Calu3 (cell line): ENCODE measurements at regions of chr2 and their contacts with region 1.

Region 1: DNA sequence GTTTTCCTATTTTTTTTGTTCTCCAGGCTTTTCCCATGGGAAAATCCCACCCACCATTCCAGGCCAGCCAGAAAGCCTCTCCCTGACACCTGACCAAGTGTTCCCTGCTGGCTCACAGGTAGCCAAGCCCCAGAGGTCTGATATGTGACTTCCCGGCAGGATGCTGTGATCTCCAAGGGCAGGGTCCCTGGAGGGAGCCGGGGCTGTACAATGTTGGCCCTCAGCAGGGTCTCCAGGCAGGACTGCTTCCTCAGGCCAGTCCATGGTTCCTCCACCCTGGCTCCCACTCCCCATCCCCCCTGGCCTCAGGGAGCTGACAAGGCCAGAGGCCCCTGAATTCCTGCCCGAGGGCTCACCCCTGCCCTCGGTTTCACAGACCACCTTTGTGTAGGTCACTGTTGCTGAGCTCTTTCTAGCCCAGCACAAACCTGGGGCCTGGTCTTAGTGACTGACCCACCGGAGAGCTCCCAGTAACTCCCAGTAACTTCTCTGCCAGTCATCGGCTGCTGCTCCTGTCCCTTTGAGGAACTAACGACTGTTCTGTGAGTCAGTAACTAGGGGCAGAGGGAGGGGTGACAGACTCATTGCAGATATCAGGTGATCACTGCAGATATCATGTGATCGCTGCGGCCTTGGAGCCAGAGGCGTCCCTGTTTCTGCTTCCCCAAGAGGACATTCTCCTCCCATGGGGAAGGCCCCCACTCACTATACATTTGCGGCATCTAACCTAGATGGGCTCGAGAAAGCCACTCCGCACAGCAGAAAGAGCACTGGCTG is 38.7 kb downstream of the SDC1 start:
- DNase-seq: peak; percentile 75
- H3K4me3 Mint-ChIP-seq: peak overlapping the region; percentile 50
- H3K27ac Mint-ChIP-seq: peak overlapping the region; percentile 68
- H3K4me1 Mint-ChIP-seq: peaks cover 54% of the 10 kb centered on the region
- H3K27me3 Mint-ChIP-seq: no peaks in the 10 kb centered on the region
- CTCF ChIP-seq: no peak

Region 2: GRCh38 chr2:20012299-20013125 is 173.8 kb before region 1 on chr2 and contains the start of gene MATN3:
- CTCF ChIA-PET with region 1: no interaction called
- intact Hi-C with region 1: no loop called
- DNase-seq: peak; percentile 55
- H3K4me3 Mint-ChIP-seq: peak within 1 kb of the TSS; percentile 61
- H3K27ac Mint-ChIP-seq: no peak within 1 kb of the TSS
- H3K4me1 Mint-ChIP-seq: no peaks in the 10 kb centered on the region
- H3K27me3 Mint-ChIP-seq: peaks cover 7% of the 10 kb centered on the region
- CTCF ChIP-seq: no peak
- total RNA-seq, gene MATN3: 2.3 and 3.4 TPM in 2 replicates

Region 3: DNA sequence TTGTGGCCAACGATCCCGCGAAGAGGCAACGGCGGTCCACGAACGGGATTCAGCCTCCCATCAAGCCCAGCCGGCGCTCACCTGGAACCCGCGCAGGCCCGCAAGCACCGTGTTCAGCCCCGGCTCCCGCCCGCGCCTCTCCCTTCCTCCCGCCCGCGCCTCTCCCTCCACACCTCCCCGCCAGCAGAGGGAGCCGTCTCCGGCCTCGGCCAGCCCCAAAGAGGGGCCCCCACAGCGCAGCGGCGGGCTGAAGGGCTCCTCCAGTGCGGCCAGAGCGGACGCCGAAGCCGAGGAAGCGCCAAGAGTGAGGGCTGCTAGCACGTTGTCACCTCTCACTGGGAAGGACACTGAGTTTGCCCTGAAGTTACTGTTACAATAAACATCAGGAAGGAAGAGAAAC is 79.5 kb before region 1 on chr2:
- CTCF ChIA-PET with region 1: interaction called, 4 read pairs
- intact Hi-C with region 1: loop called (anchors 1 kb)
- DNase-seq: peak; percentile 93
- H3K4me3 Mint-ChIP-seq: peak overlapping the region; percentile 68
- H3K27ac Mint-ChIP-seq: peak overlapping the region; percentile 46
- H3K4me1 Mint-ChIP-seq: peaks cover 28% of the 10 kb centered on the region
- H3K27me3 Mint-ChIP-seq: no peaks in the 10 kb centered on the region
- CTCF ChIP-seq: peak; percentile 67

Region 4: DNA sequence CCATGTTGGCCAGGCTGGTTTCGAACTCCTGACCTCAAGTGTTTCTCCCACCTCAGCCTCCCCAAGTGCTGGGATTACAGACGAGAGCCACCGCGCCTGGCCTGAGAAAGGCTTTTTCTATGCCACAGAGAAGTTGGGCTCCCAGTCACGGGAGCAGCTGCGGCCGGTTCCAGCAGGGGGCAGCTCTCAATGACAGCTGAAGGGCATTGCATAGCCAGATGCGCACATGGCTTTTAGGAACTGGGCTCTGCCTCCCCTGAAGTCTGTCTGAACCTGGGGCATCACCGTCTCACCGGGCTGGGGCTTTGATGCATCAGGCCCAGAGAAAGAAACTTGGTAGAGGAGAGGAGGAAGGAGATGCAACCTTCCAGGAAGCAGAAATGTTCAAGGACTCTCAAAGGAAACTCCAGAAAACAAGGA is 50.6 kb before region 1 on chr2:
- CTCF ChIA-PET with region 1: interaction called, 6 read pairs
- intact Hi-C with region 1: loop called (anchors 1 kb)
- DNase-seq: peak; percentile 75
- H3K4me3 Mint-ChIP-seq: no peak overlapping the region
- H3K27ac Mint-ChIP-seq: no peak overlapping the region
- H3K4me1 Mint-ChIP-seq: peaks cover 26% of the 10 kb centered on the region
- H3K27me3 Mint-ChIP-seq: no peaks in the 10 kb centered on the region
- CTCF ChIP-seq: peak; percentile 79

Region 5: GRCh38 chr2:20142886-20143875 is 43.1 kb before region 1 on chr2:
- CTCF ChIA-PET with region 1: interaction called, 6 read pairs
- intact Hi-C with region 1: loop called (anchors 2 kb)
- DNase-seq: peak; percentile 66
- H3K4me3 Mint-ChIP-seq: peak overlapping the region; percentile 1
- H3K27ac Mint-ChIP-seq: peak overlapping the region; percentile 66
- H3K4me1 Mint-ChIP-seq: peaks cover 82% of the 10 kb centered on the region
- H3K27me3 Mint-ChIP-seq: no peaks in the 10 kb centered on the region
- CTCF ChIP-seq: no peak

Region 6: GRCh38 chr2:20350753-20351554 is 164.7 kb after region 1 on chr2 and contains the start of gene PUM2:
- CTCF ChIA-PET with region 1: no interaction called
- intact Hi-C with region 1: no loop called
- DNase-seq: peak; percentile 96
- H3K4me3 Mint-ChIP-seq: no peak within 1 kb of the TSS
- H3K27ac Mint-ChIP-seq: peak within 1 kb of the TSS; percentile 81
- H3K4me1 Mint-ChIP-seq: peaks cover 19% of the 10 kb centered on the region
- H3K27me3 Mint-ChIP-seq: no peaks in the 10 kb centered on the region
- CTCF ChIP-seq: no peak
- total RNA-seq, gene PUM2: 96.8 and 106 TPM in 2 replicates